PC-9 (cell line): ENCODE measurements at regions of chr1 and their contacts with region 1.

Region 1: DNA sequence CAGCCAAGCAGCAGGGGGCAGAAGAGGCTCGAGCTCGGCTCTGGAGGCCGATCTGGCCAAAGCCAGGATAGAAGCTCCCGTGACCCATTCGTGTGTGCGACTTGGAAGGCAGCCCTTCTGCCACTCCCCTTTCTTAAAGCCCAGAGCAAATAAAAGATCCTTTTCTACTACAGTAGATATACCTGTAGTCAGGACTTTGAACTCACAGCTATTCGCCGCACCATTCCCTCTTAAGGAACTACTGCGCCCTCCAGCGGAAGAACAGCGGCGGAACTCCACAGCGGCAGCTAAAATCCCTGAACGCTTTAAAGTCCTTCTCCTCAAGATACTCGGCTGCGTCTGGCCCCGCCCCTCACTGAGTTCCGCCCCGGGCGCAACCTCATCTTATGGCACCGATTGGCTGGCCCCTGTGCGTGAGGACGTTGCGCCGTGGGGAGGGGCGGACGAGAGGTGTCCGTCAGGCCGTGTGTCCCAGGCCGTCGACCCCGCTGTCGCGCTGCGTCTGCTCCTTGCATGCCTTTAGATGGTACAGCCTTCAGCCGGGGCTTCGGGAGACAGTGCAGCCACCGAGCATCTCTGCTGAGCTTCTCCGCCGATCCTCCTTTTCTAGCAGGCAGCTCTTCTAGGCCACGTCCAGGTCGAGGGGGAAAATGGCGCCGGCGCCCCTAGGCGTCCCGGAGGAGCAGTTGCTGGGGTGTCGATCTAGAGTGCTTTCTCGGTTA is at the start of gene LRIG2:
- DNase-seq: peak; percentile 99
- H3K4me3 ChIP-seq: peak within 1 kb of the TSS; percentile 85
- H3K27ac ChIP-seq: peak within 1 kb of the TSS; percentile 78
- H3K4me1 ChIP-seq: peaks cover 20% of the 10 kb centered on the region
- H3K27me3 ChIP-seq: no peaks in the 10 kb centered on the region
- CTCF ChIP-seq: peak; percentile 94
- total RNA-seq, gene LRIG2: 9.4 and 10.6 TPM in 2 replicates

Region 2: GRCh38 chr1:112803906-112804762 is 268.8 kb before region 1 on chr1:
- CTCF ChIA-PET with region 1: interaction called, 8 read pairs
- POLR2A ChIA-PET with region 1: interaction called, 7 read pairs
- intact Hi-C with region 1: loop called (anchors 2 kb)
- DNase-seq: peak; percentile 68 to 78
- H3K4me3 ChIP-seq: no peak overlapping the region
- H3K27ac ChIP-seq: no peak overlapping the region
- H3K4me1 ChIP-seq: peaks cover 21% of the 10 kb centered on the region
- H3K27me3 ChIP-seq: no peaks in the 10 kb centered on the region
- CTCF ChIP-seq: peak; percentile 96

Region 3: DNA sequence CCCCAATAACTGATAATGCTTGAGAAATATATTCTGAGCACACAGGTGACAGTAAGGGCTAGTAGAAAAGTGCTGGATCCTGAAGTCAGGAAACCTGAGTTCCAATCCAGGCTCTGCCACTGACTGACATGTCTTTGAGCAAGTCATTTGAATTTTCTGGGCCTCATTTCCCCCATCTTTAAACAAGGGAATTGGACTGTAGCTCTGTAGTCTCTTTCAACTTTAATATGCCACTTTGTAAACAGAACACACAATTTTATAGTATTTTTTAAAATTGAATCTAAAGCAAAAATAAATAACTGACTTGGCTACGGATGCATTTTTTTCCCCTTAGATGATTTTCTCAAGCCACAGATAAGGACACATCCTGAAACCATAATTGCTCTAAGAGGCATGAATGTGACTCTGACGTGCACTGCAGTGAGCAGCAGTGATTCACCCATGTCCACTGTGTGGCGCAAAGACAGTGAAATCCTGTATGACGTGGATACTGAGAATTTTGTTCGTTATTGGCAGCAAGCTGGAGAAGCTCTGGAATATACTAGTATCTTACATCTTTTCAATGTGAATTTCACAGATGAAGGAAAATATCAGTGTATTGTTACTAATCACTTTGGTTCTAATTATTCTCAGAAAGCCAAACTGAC is 37.1 kb after region 1 on chr1:
- CTCF ChIA-PET with region 1: no interaction called
- POLR2A ChIA-PET with region 1: no interaction called
- intact Hi-C with region 1: no loop called
- DNase-seq: no peak
- H3K4me3 ChIP-seq: no peak overlapping the region
- H3K27ac ChIP-seq: no peak overlapping the region
- H3K4me1 ChIP-seq: no peaks in the 10 kb centered on the region
- H3K27me3 ChIP-seq: no peaks in the 10 kb centered on the region
- CTCF ChIP-seq: no peak

Region 4: DNA sequence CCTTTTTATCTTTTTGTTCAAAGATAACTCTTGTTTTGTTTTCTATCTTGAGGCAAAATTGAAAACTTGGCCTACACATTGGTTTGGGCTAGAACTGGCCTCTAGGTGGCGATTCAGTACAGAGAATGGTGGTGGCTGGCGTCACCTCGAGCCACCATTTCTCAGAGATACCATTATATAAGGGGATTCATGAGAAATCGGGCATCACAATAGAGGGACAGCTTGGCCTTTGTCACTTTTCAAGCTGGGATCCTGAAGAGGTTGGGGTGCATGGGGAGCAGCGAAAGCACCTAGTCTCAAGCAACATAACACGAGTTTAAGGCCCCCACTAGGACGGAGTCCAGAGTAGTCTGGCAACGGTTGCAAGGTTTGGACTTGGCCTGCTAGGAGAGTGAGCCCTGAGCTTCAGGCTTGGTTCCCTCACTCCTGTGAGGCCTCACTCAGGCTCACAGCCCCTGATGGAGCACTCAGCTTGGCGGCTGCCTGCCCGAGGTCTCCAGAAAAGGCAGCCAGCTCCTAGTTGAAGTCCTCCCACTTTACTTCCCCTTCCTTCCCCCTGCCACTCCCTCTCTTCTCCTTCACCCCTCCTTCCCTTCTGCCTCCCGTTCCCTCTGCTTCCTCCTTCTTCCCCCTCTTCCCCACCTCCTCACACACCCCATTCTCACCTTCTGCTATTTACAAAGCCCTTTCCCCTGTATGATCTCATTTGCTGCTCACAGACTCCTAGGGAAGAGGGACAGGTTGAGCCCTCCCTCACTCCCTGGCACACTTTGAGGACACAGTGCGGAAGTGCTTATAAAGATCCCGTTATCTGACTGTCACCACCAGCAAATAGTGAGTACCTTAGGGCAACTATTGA is 67.9 kb after region 1 on chr1:
- CTCF ChIA-PET with region 1: no interaction called
- POLR2A ChIA-PET with region 1: no interaction called
- intact Hi-C with region 1: no loop called
- DNase-seq: peak; percentile 58 to 61
- H3K4me3 ChIP-seq: no peak overlapping the region
- H3K27ac ChIP-seq: peak overlapping the region; percentile 31; the same call in 1 of the 2 replicates
- H3K4me1 ChIP-seq: peaks cover 16% of the 10 kb centered on the region
- H3K27me3 ChIP-seq: no peaks in the 10 kb centered on the region
- CTCF ChIP-seq: peak; percentile 99

Region 5: DNA sequence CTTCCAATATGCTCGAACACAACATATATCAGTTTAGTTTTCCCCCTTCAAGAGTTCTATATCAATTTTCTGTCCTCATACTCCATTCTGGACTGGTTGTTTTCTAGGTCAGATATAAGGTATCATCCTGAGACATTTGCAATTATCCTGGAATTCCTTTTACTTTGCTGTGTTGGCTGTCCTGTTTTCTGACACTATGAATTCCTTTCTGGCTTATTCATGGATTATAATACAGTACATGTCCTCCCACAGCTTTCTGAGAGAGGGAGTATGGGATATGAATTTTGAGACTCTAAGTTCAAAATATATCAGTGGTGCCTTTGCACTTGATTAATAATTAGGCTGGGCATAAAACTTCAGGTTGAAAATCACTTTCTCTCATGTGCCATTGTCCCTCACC is 674.5 kb after region 1 on chr1:
- CTCF ChIA-PET with region 1: no interaction called
- POLR2A ChIA-PET with region 1: interaction called, 19 read pairs
- intact Hi-C with region 1: no loop called
- DNase-seq: no peak
- H3K4me3 ChIP-seq: no peak overlapping the region
- H3K27ac ChIP-seq: no peak overlapping the region
- H3K4me1 ChIP-seq: no peaks in the 10 kb centered on the region
- H3K27me3 ChIP-seq: no peaks in the 10 kb centered on the region
- CTCF ChIP-seq: no peak